Activated naive CD4-positive, alpha-beta T cell treated with anti-CD3 and anti-CD28 coated beads, Interleukin-2, amount 10 ng/mL, durations not matched to agents 7 days and 5 days (primary cell): ENCODE measurements at regions of chr1 and their contacts with region 1.

Region 1: GRCh38 chr1:204398217-204399081 is 13.2 kb downstream of the PPP1R15B start:
- DNase-seq: peak; percentile 68
- H3K4me3 Mint-ChIP-seq: no peak overlapping the region
- H3K27ac Mint-ChIP-seq: peak overlapping the region; percentile 84
- H3K4me1 Mint-ChIP-seq: peaks cover 2% of the 10 kb centered on the region
- H3K27me3 Mint-ChIP-seq: no peaks in the 10 kb centered on the region

Region 2: GRCh38 chr1:204162231-204163074 is 236.0 kb before region 1 on chr1:
- CTCF ChIA-PET with region 1: interaction called, 25 read pairs
- DNase-seq: peak; percentile 84
- H3K4me3 Mint-ChIP-seq: no peak overlapping the region
- H3K27ac Mint-ChIP-seq: no peak overlapping the region
- H3K4me1 Mint-ChIP-seq: no peaks in the 10 kb centered on the region
- H3K27me3 Mint-ChIP-seq: peaks cover 27% of the 10 kb centered on the region

Region 3: DNA sequence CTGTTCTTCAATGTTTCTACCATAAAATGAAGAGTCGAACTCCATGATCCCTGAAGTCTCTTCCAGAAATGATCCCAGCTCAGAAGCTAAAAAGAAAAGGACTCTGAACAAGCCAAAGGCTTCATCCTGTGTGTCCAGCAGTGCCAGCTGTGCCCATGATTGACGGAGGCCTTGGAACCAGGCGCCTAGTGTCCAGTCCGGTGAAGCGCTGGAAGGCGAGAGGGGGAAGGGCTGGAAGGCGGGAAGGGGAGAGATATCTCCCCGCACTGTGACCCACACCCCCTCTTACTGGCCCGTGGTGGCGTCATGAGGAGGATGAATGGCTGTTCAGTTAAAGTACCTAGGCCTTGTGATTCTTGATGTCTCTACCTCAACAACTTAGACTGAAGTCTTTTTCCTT is 28.3 kb before region 1 on chr1:
- CTCF ChIA-PET with region 1: interaction called, 12 read pairs
- DNase-seq: no peak
- H3K4me3 Mint-ChIP-seq: no peak overlapping the region
- H3K27ac Mint-ChIP-seq: no peak overlapping the region
- H3K4me1 Mint-ChIP-seq: no peaks in the 10 kb centered on the region
- H3K27me3 Mint-ChIP-seq: peaks cover 21% of the 10 kb centered on the region

Region 4: DNA sequence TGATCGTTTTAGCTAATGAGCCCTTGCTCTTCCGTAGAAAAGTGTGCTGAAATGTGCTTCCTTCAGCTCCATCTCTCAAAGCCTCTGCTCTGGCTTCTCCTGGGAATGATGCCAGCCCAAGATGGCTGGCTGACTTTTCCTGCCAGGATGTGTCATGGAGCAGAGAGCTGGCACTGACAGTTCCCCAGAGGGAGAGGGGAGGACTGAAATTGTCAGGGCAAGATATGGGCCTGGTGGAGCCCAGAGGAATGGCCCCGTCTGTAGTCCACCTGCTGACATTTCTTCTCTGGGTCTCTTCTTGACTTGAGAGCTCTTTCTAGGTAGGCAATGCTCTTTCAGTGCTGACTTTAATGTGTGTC is 13.5 kb before region 1 on chr1:
- CTCF ChIA-PET with region 1: interaction called, 21 read pairs
- DNase-seq: no peak
- H3K4me3 Mint-ChIP-seq: no peak overlapping the region
- H3K27ac Mint-ChIP-seq: no peak overlapping the region
- H3K4me1 Mint-ChIP-seq: peaks cover 3% of the 10 kb centered on the region
- H3K27me3 Mint-ChIP-seq: no peaks in the 10 kb centered on the region

Region 5: DNA sequence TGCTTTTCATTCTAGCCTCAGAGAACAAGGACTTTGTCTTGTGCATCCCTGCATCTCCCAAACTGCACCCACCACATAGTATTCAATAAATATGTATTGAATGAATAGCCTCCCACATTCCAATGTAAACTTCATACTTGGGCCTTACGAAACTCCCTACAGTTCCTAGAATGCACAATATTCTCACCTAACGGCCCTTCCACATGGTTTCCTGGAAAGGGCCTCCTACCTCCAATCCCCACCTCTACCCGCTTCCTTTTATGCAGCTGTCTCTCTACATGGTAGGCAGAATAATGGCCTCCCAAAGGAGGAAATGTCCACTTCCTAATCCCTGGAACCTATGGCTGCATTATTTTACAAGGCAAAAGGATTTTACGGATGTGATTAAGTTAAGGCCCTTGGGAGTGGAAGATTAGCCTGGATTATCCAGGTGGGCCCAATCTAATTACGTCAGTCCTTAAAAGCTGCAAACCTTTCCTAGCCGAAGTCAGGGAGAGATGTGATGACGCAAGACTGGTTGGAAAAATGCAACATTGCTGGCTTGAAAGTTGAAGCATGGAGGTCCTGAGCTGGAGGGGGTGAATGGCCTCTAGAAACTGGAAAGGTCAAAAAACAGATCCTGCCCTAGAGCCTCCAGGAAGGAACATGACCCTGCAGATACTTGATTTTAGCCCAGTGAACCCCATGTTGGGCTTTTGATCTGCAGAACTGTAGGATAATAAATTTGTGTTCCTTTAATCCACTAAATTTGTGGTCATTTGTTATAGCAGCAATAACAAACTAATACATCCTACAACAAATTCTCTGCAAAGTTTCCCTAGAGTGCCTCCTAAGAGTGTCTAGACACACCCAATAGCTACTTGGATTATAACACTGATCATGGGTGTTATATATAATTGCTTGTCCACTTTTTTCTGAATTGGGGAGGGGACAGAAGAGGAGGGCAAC is 101.3 kb after region 1 on chr1:
- CTCF ChIA-PET with region 1: interaction called, 13 read pairs
- DNase-seq: no peak
- H3K4me3 Mint-ChIP-seq: no peak overlapping the region
- H3K27ac Mint-ChIP-seq: no peak overlapping the region
- H3K4me1 Mint-ChIP-seq: peaks cover 43% of the 10 kb centered on the region
- H3K27me3 Mint-ChIP-seq: peaks cover 13% of the 10 kb centered on the region